K562 (cell line): ENCODE measurements at regions of chr13 and their contacts with region 1.

Region 1: GRCh38 chr13:95676762-95677563 is at the start of gene DNAJC3:
- DNase-seq: peak; percentile 94 to 97 (median 95)
- ATAC-seq: peak; percentile 95
- H3K4me3 ChIP-seq: peak within 1 kb of the TSS; percentile 67
- H3K27ac ChIP-seq: peak within 1 kb of the TSS; percentile 96
- H3K4me1 ChIP-seq: peaks cover 0 to 6% of the 10 kb centered on the region in 2 experiments; a peak in 3 of 5 replicates
- H3K27me3 ChIP-seq: no peaks in the 10 kb centered on the region
- CTCF ChIP-seq: no peak
- EP300 ChIP-seq: no peak
- POLR2A ChIP-seq: peak; percentile 88
- RAD21 ChIP-seq: no peak
- polyA plus RNA-seq, gene DNAJC3: 8.2 to 12.0 TPM

Region 2: GRCh38 chr13:95756072-95756471 is 79.1 kb after region 1 on chr13:
- CTCF ChIA-PET with region 1: no interaction called
- POLR2A ChIA-PET with region 1: interaction called, 3 read pairs
- in situ Hi-C with region 1: no loop called
- intact Hi-C with region 1: loop called (anchors 2 kb)
- DNase-seq: peak; percentile 10 to 68 (median 36)
- ATAC-seq: peak; percentile 85
- H3K4me3 ChIP-seq: no peak overlapping the region
- H3K27ac ChIP-seq: peak overlapping the region; percentile 87
- H3K4me1 ChIP-seq: peaks cover 0 to 13% of the 10 kb centered on the region in 2 experiments; a peak in 2 of 5 replicates
- H3K27me3 ChIP-seq: no peaks in the 10 kb centered on the region
- CTCF ChIP-seq: no peak
- EP300 ChIP-seq: peak; percentile 36; the same call in 1 of the 2 replicates
- POLR2A ChIP-seq: no peak
- RAD21 ChIP-seq: no peak

Region 3: GRCh38 chr13:97432917-97433726 is 1756.2 kb after region 1 on chr13:
- CTCF ChIA-PET with region 1: no interaction called
- POLR2A ChIA-PET with region 1: no interaction called
- in situ Hi-C with region 1: no loop called
- intact Hi-C with region 1: loop called (anchors 10 kb)
- DNase-seq: peak; percentile 81 to 88 (median 84)
- ATAC-seq: peak; percentile 91
- H3K4me3 ChIP-seq: peak overlapping the region; percentile 49
- H3K27ac ChIP-seq: peak overlapping the region; percentile 85
- H3K4me1 ChIP-seq: peaks cover 6 to 16% of the 10 kb centered on the region in 2 experiments; a peak in 4 of 5 replicates
- H3K27me3 ChIP-seq: no peaks in the 10 kb centered on the region
- CTCF ChIP-seq: no peak
- EP300 ChIP-seq: no peak
- POLR2A ChIP-seq: peak; percentile 69; the same call in 1 of the 2 replicates
- RAD21 ChIP-seq: no peak